Sciatic nerve (tissue), 2 donors: ENCODE measurements at regions of chr13 and their contacts with region 1.

Region 1: GRCh38 chr13:62887046-62887445 is 1471.4 kb upstream of the PCDH20 start:
- DNase-seq: no peak
- ATAC-seq: no peak

Region 2: DNA sequence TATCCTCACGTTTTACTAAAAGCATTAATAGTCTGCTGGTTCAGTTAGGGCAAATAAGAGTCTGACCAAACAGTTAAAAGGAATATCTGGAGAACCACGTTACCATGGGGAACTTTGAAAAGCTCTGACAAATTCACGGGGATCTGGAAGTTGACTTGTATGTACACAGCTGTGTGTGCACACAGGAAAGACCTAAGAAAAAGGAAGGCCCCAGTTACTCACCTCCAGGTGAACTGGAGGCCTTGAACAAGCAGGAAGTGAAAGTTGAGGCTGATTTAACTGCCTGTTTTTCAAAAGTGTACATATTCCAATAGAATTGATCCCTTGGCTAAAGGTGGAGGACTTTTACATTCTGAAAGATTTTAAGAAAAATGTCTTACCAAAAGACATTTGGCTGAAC is 420.2 kb after region 1 on chr13:
- intact Hi-C with region 1: loop called (anchors 5 kb)
- DNase-seq: no peak
- ATAC-seq: no peak

Region 3: DNA sequence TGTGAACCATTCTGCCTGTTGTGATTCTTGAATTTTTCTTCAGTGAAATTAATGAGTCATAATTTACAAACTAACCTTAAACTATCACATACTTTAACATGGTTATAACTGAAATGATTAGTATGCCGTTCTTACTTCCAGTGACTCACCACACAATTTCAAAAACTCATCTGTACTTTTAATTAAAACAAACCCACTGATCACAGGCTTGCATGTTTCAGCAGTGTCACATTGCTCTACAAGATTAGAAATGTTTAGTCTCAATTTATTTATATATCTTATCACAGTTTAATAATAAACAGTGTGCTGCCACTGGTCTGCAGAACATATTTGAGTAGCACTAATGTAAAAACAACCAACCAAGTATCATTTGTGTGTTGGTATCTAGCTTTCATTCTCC is 756.5 kb after region 1 on chr13:
- intact Hi-C with region 1: no loop called
- DNase-seq: no peak
- ATAC-seq: no peak